MCF 10A (cell line): ENCODE measurements at regions of chr5 and their contacts with region 1.

Region 1: GRCh38 chr5:54883374-54884212 is 101.8 kb downstream of the ESM1 start:
- DNase-seq: no peak
- H3K4me3 Mint-ChIP-seq: no peak overlapping the region
- H3K27ac Mint-ChIP-seq: peak overlapping the region; percentile 53
- H3K4me1 Mint-ChIP-seq: peaks cover 18% of the 10 kb centered on the region
- H3K27me3 Mint-ChIP-seq: no peaks in the 10 kb centered on the region
- CTCF ChIP-seq: no peak

Region 2: DNA sequence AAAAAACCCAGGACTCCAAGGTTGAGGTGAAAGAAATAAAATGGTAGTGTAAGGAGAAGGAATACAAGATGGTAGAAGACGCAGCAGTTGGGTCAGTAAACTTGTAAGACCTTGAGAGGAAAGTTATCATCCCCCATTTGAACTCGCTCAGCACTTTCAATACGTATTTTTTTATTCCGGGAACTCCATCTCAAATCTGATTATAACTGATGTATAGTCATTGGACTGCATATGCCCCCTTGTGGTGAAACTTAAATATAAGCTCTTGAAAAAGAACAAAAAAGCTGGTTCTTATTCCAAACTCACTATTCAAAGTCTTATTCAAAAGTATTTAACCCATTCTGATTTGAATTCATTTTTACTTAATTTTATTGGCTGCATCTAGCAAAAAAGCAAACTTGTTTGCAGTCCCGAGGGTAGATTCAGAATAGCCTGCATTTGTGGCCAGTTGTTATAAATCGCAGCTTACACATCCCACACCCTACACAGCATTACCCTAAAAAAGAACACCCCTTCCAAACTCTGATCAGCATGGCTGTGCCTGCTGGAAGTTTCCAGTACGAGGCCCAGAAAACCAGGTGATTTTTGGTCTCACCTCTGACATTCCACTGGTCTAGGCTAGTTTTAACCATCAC is 16.2 kb before region 1 on chr5:
- CTCF ChIA-PET with region 1: interaction called, 20 read pairs
- POLR2A ChIA-PET with region 1: interaction called, 5 read pairs
- intact Hi-C with region 1: no loop called
- DNase-seq: peak; percentile 57
- H3K4me3 Mint-ChIP-seq: peak overlapping the region; percentile 44
- H3K27ac Mint-ChIP-seq: no peak overlapping the region
- H3K4me1 Mint-ChIP-seq: peaks cover 6% of the 10 kb centered on the region
- H3K27me3 Mint-ChIP-seq: peaks cover 13% of the 10 kb centered on the region
- CTCF ChIP-seq: peak; percentile 49